CD14-positive monocyte (primary cell): ENCODE measurements at regions of chr12 and their contacts with region 1.

Region 1: GRCh38 chr12:57005980-57006808 is at the start of gene ZBTB39:
- DNase-seq: peak; percentile 15 to 66 (median 48)
- H3K4me3 ChIP-seq: peak within 1 kb of the TSS; percentile 59 to 87 (median 86)
- H3K4me3 Mint-ChIP-seq: peak within 1 kb of the TSS; percentile 86 to 94
- H3K27ac ChIP-seq: peak within 1 kb of the TSS in 1 of 2 donors; percentile 55
- H3K27ac Mint-ChIP-seq: peak within 1 kb of the TSS; percentile 18 to 76 (median 53)
- H3K4me1 ChIP-seq: peaks cover 13 to 21% of the 10 kb centered on the region in 2 donors
- H3K4me1 Mint-ChIP-seq: peaks cover 23% of the 10 kb centered on the region
- H3K27me3 ChIP-seq: no peaks in the 10 kb centered on the region
- H3K27me3 Mint-ChIP-seq: peaks cover 0 to 1% (median 0%) of the 10 kb centered on the region in 3 donors
- CTCF ChIP-seq: peak; percentile 64
- polyA plus RNA-seq, gene ZBTB39: 0.65 to 3.7 (median 1.2) TPM

Region 2: DNA sequence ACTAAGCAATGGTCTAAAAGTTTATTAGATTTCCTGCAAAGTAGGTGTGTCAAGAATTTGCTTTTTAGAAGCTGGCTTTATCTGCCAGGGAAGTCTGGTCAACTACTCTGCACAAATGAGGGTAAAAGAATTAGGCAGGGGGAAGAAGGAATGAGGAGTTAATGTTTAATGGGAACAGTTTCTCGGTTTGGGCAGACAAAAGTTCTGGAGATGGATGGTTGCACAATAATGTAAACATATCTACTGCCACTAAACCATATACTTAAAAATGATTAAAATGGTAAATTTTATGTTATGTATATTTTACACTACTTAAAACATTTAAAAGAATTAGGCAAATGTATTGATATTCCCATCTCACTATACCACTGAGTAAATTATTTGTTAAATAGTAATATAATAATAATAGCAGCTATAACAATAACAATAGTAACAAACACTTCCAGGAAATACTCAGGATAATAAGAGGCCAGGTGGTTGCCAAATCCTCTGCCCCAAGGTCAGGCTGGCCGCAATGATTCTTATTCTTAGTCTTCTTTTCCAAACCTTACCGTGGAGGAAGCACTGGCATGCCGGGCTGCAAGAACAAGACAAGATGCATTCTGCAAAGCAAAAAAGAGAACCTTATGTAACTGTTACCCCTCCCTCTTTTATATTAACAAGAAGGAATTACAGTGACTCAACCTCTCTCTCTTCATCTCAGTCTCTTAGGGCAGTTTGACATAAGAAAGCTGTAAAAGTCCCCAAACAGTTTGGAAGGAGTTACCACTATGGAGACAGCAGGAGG is 720.0 kb before region 1 on chr12:
- intact Hi-C with region 1: no loop called
- DNase-seq: no peak
- H3K4me3 ChIP-seq: no peak overlapping the region
- H3K4me3 Mint-ChIP-seq: no peak overlapping the region
- H3K27ac ChIP-seq: peak overlapping the region in 1 of 2 donors; percentile 22
- H3K27ac Mint-ChIP-seq: peak overlapping the region in 2 of 7 donors; percentile 27 to 33
- H3K4me1 ChIP-seq: no peaks in the 10 kb centered on the region
- H3K4me1 Mint-ChIP-seq: peaks cover 4% of the 10 kb centered on the region
- H3K27me3 ChIP-seq: no peaks in the 10 kb centered on the region
- H3K27me3 Mint-ChIP-seq: peaks cover 0 to 3% (median 0%) of the 10 kb centered on the region in 3 donors
- CTCF ChIP-seq: no peak

Region 3: DNA sequence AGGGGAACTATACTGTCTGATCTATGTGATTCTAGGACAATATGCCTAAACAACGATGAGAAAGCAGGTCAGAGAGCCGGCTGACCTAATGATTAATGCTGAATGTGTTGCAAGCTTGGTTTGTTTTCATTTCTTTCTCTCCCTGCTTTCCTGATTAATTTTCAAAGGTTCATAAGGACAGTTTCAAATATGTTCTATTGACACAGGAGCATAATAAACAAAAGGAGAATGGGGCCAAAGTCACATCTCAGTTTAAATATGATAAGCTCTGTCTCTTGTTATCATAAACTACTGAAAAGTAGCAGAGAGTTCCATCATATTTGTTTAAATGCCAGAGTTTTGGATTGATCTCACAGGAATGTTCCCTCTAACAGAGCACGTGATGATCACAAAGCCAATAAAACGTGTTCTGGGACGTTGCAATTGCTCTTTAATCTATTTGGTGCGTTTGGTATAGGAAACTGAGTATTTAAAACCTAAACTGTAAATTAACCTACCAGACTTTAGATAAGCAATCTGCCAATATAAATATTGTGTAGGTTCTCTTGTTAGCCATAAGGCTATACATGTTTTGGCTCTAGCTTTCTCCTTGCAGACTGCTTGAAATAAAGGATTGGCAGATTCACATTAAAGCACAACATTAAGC is 246.8 kb before region 1 on chr12:
- intact Hi-C with region 1: loop called (anchors 5 kb)
- DNase-seq: no peak
- H3K4me3 ChIP-seq: no peak overlapping the region
- H3K4me3 Mint-ChIP-seq: no peak overlapping the region
- H3K27ac ChIP-seq: no peak overlapping the region
- H3K27ac Mint-ChIP-seq: no peak overlapping the region
- H3K4me1 ChIP-seq: peaks cover 0 to 2% of the 10 kb centered on the region in 2 donors
- H3K4me1 Mint-ChIP-seq: peaks cover 7% of the 10 kb centered on the region
- H3K27me3 ChIP-seq: no peaks in the 10 kb centered on the region
- H3K27me3 Mint-ChIP-seq: peaks cover 0 to 5% (median 4%) of the 10 kb centered on the region in 3 donors
- CTCF ChIP-seq: no peak

Region 4: GRCh38 chr12:57063991-57064685 is 57.9 kb after region 1 on chr12:
- intact Hi-C with region 1: loop called (anchors 2 to 5 kb)
- DNase-seq: peak; percentile 56 to 83 (median 59)
- H3K4me3 ChIP-seq: peak overlapping the region in 2 of 3 experiments; percentile 16 to 44
- H3K4me3 Mint-ChIP-seq: peak overlapping the region in 1 of 2 donors; percentile 51
- H3K27ac ChIP-seq: peak overlapping the region in 1 of 2 donors; percentile 83
- H3K27ac Mint-ChIP-seq: peak overlapping the region; percentile 82 to 90 (median 86)
- H3K4me1 ChIP-seq: peaks cover 16 to 29% of the 10 kb centered on the region in 2 donors
- H3K4me1 Mint-ChIP-seq: peaks cover 26% of the 10 kb centered on the region
- H3K27me3 ChIP-seq: no peaks in the 10 kb centered on the region
- H3K27me3 Mint-ChIP-seq: no peaks in the 10 kb centered on the region
- CTCF ChIP-seq: no peak